K562 (cell line): ENCODE measurements at regions of chr6 and their contacts with region 1.

Region 1: GRCh38 chr6:44246663-44247337 is at the start of gene HSP90AB1:
- DNase-seq: peak; percentile 88 to 99 (median 94)
- ATAC-seq: peak; percentile 85
- H3K4me3 ChIP-seq: peak within 1 kb of the TSS; percentile 94
- H3K27ac ChIP-seq: peak within 1 kb of the TSS; percentile 98
- H3K4me1 ChIP-seq: peaks cover 22 to 34% of the 10 kb centered on the region in 2 experiments
- H3K27me3 ChIP-seq: no peaks in the 10 kb centered on the region
- CTCF ChIP-seq: no peak
- EP300 ChIP-seq: peak; percentile 34; the same call in 1 of the 2 replicates
- POLR2A ChIP-seq: peak; percentile 100
- RAD21 ChIP-seq: no peak
- polyA plus RNA-seq, gene HSP90AB1: 1,975 to 2,865 TPM

Region 2: GRCh38 chr6:44096612-44097011 is 150.2 kb before region 1 on chr6:
- CTCF ChIA-PET with region 1: no interaction called
- POLR2A ChIA-PET with region 1: interaction called, 14 read pairs
- in situ Hi-C with region 1: no loop called
- intact Hi-C with region 1: no loop called
- DNase-seq: peak; percentile 56 to 73 (median 64)
- ATAC-seq: peak; percentile 84
- H3K4me3 ChIP-seq: no peak overlapping the region
- H3K27ac ChIP-seq: no peak overlapping the region
- H3K4me1 ChIP-seq: peaks cover 0 to 4% of the 10 kb centered on the region in 2 experiments; a peak in 3 of 5 replicates
- H3K27me3 ChIP-seq: no peaks in the 10 kb centered on the region
- CTCF ChIP-seq: peak; percentile 81 to 82 (median 81)
- EP300 ChIP-seq: no peak
- POLR2A ChIP-seq: no peak
- RAD21 ChIP-seq: peak; percentile 64 to 75

Region 3: GRCh38 chr6:44172731-44173500 is 73.9 kb before region 1 on chr6:
- CTCF ChIA-PET with region 1: no interaction called
- POLR2A ChIA-PET with region 1: interaction called, 32 read pairs
- in situ Hi-C with region 1: no loop called
- intact Hi-C with region 1: no loop called
- DNase-seq: peak; percentile 90 to 94 (median 92)
- ATAC-seq: peak; percentile 98
- H3K4me3 ChIP-seq: no peak overlapping the region
- H3K27ac ChIP-seq: no peak overlapping the region
- H3K4me1 ChIP-seq: peaks cover 2 to 25% of the 10 kb centered on the region in 2 experiments; a peak in 3 of 5 replicates
- H3K27me3 ChIP-seq: peaks cover 2 to 21% of the 10 kb centered on the region in 2 experiments; a peak in 2 of 5 replicates
- CTCF ChIP-seq: peak; percentile 96 to 99 (median 98)
- EP300 ChIP-seq: no peak; the same call in 1 of the 2 replicates
- POLR2A ChIP-seq: no peak
- RAD21 ChIP-seq: peak; percentile 97 to 99

Region 4: GRCh38 chr6:44192428-44193041 is 54.3 kb before region 1 on chr6:
- CTCF ChIA-PET with region 1: no interaction called
- POLR2A ChIA-PET with region 1: interaction called, 32 read pairs
- in situ Hi-C with region 1: no loop called
- intact Hi-C with region 1: no loop called
- DNase-seq: peak in 2 of 4 experiments; percentile 74 to 79
- ATAC-seq: peak; percentile 94
- H3K4me3 ChIP-seq: no peak overlapping the region
- H3K27ac ChIP-seq: peak overlapping the region; percentile 47
- H3K4me1 ChIP-seq: peaks cover 8 to 11% of the 10 kb centered on the region in 2 experiments; a peak in 4 of 5 replicates
- H3K27me3 ChIP-seq: no peaks in the 10 kb centered on the region
- CTCF ChIP-seq: no peak
- EP300 ChIP-seq: no peak
- POLR2A ChIP-seq: peak; percentile 69; the same call in 1 of the 2 replicates
- RAD21 ChIP-seq: no peak

Region 5: DNA sequence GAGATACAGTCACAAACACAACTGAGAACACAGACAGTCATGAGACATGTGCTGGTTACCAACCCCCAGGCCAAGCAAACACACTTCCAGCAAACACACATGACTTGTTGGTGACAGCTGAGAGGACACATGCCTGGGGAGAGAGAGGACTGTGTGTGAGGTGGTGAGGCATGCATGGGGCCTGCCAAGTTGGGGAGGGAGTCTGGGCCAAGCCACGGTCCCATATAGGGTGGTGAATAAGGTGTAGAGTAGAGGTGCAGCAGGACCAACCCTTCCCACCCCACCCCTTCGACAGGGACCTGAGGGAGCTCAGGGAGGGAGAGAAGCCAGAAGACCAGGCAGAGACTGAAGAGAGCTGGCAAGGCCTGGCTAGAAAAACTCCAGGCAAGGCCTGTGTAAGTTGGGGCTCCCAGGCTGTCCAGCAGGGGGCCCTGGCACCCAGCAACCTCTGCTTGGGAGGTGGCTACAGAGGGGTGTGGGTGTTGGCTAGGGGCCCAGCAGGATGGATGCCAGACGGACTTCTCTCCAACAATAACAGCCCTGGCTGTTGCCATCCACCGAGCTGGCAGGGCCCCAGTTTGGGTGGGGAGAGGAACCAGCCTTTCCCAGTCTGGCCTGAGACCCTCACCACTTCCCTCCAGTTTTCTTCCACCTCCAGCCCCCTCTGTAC is 25.4 kb before region 1 on chr6:
- CTCF ChIA-PET with region 1: no interaction called
- POLR2A ChIA-PET with region 1: interaction called, 104 read pairs
- in situ Hi-C with region 1: no loop called
- intact Hi-C with region 1: loop called (anchors 1 kb)
- DNase-seq: peak; percentile 71 to 92 (median 81)
- ATAC-seq: peak; percentile 65
- H3K4me3 ChIP-seq: no peak overlapping the region
- H3K27ac ChIP-seq: peak overlapping the region; percentile 48; the same call in 1 of the 3 replicates
- H3K4me1 ChIP-seq: peaks cover 73 to 88% of the 10 kb centered on the region in 2 experiments
- H3K27me3 ChIP-seq: no peaks in the 10 kb centered on the region
- CTCF ChIP-seq: peak; percentile 94 to 97 (median 94)
- EP300 ChIP-seq: no peak
- POLR2A ChIP-seq: no peak
- RAD21 ChIP-seq: peak; percentile 66 to 83

Region 6: DNA sequence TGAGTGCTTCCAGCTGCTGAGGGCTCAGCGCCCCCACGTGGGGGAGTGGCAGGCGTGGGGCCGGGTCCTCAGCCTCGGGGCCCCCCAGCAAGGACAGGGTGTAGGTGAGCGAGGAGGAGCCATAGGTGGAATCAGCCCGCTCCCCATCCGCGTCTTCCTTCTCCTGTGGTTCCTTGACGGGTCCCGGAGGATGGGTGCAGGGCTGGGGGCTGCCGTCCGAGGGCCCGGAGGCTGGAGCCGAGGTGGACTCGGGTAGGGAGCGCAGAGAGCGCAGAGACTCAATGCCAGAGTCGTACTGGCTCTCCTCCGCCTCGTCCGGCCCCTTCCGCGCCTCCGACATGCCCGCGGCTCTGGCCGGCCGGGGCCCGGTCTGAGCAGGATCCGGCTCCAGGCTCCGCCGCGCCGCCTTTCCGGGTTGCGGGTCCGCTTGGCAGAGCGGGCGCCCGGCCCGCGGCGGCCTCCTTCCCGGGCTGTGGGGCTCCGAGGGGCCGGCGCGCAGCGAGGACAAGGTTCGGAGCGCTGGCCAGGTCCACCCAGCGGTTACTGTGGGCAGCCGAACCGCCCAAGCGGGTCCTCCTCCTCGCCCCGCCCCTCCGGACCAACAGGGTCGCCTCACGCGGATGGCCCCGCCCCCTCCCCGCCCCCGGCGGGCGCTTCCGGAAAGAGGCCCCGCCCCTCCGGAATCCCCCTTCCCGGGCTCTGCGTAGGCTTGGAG is 18.4 kb after region 1 on chr6 and contains the start of gene NFKBIE:
- CTCF ChIA-PET with region 1: no interaction called
- POLR2A ChIA-PET with region 1: interaction called, 69 read pairs
- in situ Hi-C with region 1: no loop called
- intact Hi-C with region 1: no loop called
- DNase-seq: peak; percentile 95 to 99 (median 99)
- ATAC-seq: peak; percentile 84
- H3K4me3 ChIP-seq: peak within 1 kb of the TSS; percentile 83
- H3K27ac ChIP-seq: peak within 1 kb of the TSS; percentile 74
- H3K4me1 ChIP-seq: peaks cover 19 to 31% of the 10 kb centered on the region in 2 experiments; a peak in 4 of 5 replicates
- H3K27me3 ChIP-seq: peaks cover 16 to 17% of the 10 kb centered on the region in 2 experiments
- CTCF ChIP-seq: peak; percentile 62 to 74 (median 65)
- EP300 ChIP-seq: no peak
- POLR2A ChIP-seq: peak; percentile 70
- RAD21 ChIP-seq: peak; percentile 23 to 75; a peak in 2 of 4 replicates
- polyA plus RNA-seq, gene NFKBIE: 2.1 to 2.9 TPM

Region 7: GRCh38 chr6:44342489-44342888 is 95.7 kb after region 1 on chr6 and contains the start of gene SPATS1:
- CTCF ChIA-PET with region 1: no interaction called
- POLR2A ChIA-PET with region 1: no interaction called
- in situ Hi-C with region 1: no loop called
- intact Hi-C with region 1: no loop called
- DNase-seq: no peak
- ATAC-seq: peak; percentile 18
- H3K4me3 ChIP-seq: no peak within 1 kb of the TSS
- H3K27ac ChIP-seq: no peak within 1 kb of the TSS
- H3K4me1 ChIP-seq: peaks cover 5 to 11% of the 10 kb centered on the region in 2 experiments; a peak in 3 of 5 replicates
- H3K27me3 ChIP-seq: peaks cover 27 to 42% of the 10 kb centered on the region in 2 experiments; a peak in 4 of 5 replicates
- CTCF ChIP-seq: no peak
- EP300 ChIP-seq: no peak
- POLR2A ChIP-seq: no peak
- RAD21 ChIP-seq: no peak
- polyA plus RNA-seq, gene SPATS1: not detected

Region 8: GRCh38 chr6:44464527-44465310 is 217.9 kb after region 1 on chr6:
- CTCF ChIA-PET with region 1: no interaction called
- POLR2A ChIA-PET with region 1: no interaction called
- in situ Hi-C with region 1: no loop called
- intact Hi-C with region 1: no loop called
- DNase-seq: no peak
- ATAC-seq: no peak
- H3K4me3 ChIP-seq: no peak overlapping the region
- H3K27ac ChIP-seq: no peak overlapping the region
- H3K4me1 ChIP-seq: peaks cover 9 to 11% of the 10 kb centered on the region in 2 experiments; a peak in 4 of 5 replicates
- H3K27me3 ChIP-seq: no peaks in the 10 kb centered on the region
- CTCF ChIP-seq: no peak
- EP300 ChIP-seq: no peak
- POLR2A ChIP-seq: no peak
- RAD21 ChIP-seq: no peak